H1 (cell line): ENCODE measurements at regions of chr9 and their contacts with region 1.

Region 1: DNA sequence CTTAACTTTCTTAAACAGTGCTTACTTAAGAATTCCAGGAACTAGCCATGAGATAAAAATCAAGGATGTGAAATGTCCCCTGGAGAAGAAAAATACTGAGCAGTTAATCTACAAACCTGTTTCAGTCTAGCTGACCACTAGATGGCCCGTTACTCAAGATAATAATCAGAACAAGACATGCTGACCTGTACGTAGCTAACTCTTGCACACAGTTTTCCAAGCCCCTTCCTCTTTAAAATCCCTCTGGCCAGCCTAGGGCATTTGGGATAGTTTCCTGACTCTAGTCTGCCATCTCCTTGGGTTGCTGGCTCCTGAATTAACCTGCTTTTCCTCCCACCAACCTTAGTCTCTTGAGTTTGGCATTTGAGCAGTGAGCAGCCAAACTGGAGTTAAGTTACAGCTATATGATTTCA is 59.2 kb upstream of the TRAF1 start:
- DNase-seq: no peak
- H3K4me3 ChIP-seq: no peak overlapping the region
- H3K27ac ChIP-seq: no peak overlapping the region
- H3K4me1 ChIP-seq: no peaks in the 10 kb centered on the region
- H3K27me3 ChIP-seq: no peaks in the 10 kb centered on the region
- CTCF ChIP-seq: peak in 2 of 3 experiments; percentile 64 to 66; a peak in 3 of 4 replicates
- EP300 ChIP-seq: no peak
- POLR2A ChIP-seq: no peak
- RAD21 ChIP-seq: peak; percentile 70 to 78

Region 2: DNA sequence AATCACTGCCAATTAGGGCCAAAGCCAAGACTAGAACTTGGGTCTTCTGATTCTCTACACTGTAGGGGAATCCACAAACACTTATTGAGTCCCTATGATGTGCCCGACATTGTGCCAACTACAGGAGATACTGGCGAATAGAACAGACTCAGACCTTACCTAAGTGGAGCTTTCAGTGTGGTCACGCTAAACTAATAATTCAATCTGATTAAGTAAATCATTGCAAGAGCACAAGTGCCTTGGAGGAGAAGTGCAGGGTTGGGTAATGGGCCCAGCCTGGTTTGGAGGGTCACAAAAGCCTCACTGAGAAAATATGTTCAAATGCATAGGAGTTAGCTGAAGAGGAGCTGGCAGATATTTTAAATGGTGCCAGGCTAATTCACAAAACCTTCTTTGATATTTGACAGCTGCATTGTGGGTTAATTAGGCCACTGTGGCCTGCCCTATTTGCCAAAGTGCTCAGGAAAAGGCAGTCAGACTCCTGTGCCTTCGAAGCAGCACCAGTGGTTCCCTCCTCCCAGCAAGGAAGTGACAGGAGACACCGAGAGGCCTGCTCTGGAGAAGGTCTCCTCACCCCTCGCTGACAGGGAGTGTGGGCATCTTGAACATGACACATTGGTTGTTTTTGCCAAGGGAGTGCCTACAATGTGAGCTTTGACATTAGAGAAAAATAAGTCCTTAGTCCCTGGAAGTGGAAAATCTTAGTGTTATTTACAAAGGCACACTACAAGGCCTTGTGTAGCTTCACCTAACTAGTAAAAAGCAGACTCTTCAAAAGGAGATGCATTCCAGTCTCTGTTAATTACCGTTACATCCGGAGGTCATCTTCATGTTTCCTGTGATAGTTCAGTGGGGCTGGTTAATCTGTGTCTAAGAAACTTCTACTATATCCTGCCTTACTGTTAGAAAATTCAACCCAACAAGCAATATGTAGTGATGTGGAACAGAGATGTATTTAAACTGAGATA is 35.1 kb before region 1 on chr9:
- CTCF ChIA-PET with region 1: interaction called, 17 read pairs
- POLR2A ChIA-PET with region 1: no interaction called
- DNase-seq: no peak
- H3K4me3 ChIP-seq: no peak overlapping the region
- H3K27ac ChIP-seq: no peak overlapping the region
- H3K4me1 ChIP-seq: no peaks in the 10 kb centered on the region; a peak in 2 of 7 replicates
- H3K27me3 ChIP-seq: no peaks in the 10 kb centered on the region
- CTCF ChIP-seq: no peak
- EP300 ChIP-seq: no peak
- POLR2A ChIP-seq: no peak
- RAD21 ChIP-seq: no peak

Region 3: DNA sequence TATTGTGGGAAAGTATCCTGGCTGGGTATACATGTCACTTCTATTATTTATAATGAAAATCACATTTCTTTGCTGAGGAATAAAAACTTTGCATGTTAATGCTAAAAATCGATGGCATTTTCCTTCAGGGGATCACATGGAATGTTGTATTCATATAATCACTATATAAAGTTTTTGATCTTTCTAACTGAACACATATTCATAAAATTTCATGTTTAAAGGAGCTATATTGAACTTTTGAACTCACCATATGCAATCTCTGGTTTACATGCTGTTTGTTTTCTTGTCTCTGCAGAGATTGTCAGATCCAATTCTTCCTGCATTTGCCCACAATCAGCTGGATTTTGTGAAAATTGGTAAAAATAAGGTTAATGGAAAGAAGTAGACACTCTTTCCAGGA is 25.8 kb before region 1 on chr9:
- CTCF ChIA-PET with region 1: interaction called, 21 read pairs
- POLR2A ChIA-PET with region 1: interaction called, 4 read pairs
- DNase-seq: no peak
- H3K4me3 ChIP-seq: no peak overlapping the region
- H3K27ac ChIP-seq: no peak overlapping the region
- H3K4me1 ChIP-seq: peaks cover 0 to 3% (median 2%) of the 10 kb centered on the region in 4 experiments; a peak in 2 of 7 replicates
- H3K27me3 ChIP-seq: no peaks in the 10 kb centered on the region
- CTCF ChIP-seq: no peak
- EP300 ChIP-seq: no peak
- POLR2A ChIP-seq: no peak
- RAD21 ChIP-seq: no peak

Region 4: GRCh38 chr9:120965344-120966012 is 20.3 kb before region 1 on chr9:
- CTCF ChIA-PET with region 1: interaction called, 21 read pairs
- POLR2A ChIA-PET with region 1: interaction called, 4 read pairs
- DNase-seq: no peak
- H3K4me3 ChIP-seq: no peak overlapping the region
- H3K27ac ChIP-seq: no peak overlapping the region
- H3K4me1 ChIP-seq: peaks cover 2 to 9% (median 5%) of the 10 kb centered on the region in 4 experiments; a peak in 4 of 7 replicates
- H3K27me3 ChIP-seq: no peaks in the 10 kb centered on the region
- CTCF ChIP-seq: no peak
- EP300 ChIP-seq: no peak
- POLR2A ChIP-seq: no peak
- RAD21 ChIP-seq: no peak

Region 5: GRCh38 chr9:120971938-120972337 is 13.9 kb before region 1 on chr9:
- CTCF ChIA-PET with region 1: interaction called, 21 read pairs
- POLR2A ChIA-PET with region 1: no interaction called
- DNase-seq: no peak
- H3K4me3 ChIP-seq: no peak overlapping the region
- H3K27ac ChIP-seq: no peak overlapping the region
- H3K4me1 ChIP-seq: peaks cover 0 to 4% (median 0%) of the 10 kb centered on the region in 4 experiments; a peak in 1 of 7 replicates
- H3K27me3 ChIP-seq: no peaks in the 10 kb centered on the region
- CTCF ChIP-seq: no peak
- EP300 ChIP-seq: no peak
- POLR2A ChIP-seq: no peak
- RAD21 ChIP-seq: no peak

Region 6: GRCh38 chr9:121082075-121082474 is 96.3 kb after region 1 on chr9:
- CTCF ChIA-PET with region 1: interaction called, 13 read pairs
- POLR2A ChIA-PET with region 1: no interaction called
- DNase-seq: no peak
- H3K4me3 ChIP-seq: no peak overlapping the region
- H3K27ac ChIP-seq: no peak overlapping the region
- H3K4me1 ChIP-seq: no peaks in the 10 kb centered on the region
- H3K27me3 ChIP-seq: no peaks in the 10 kb centered on the region
- CTCF ChIP-seq: no peak
- EP300 ChIP-seq: no peak
- POLR2A ChIP-seq: no peak
- RAD21 ChIP-seq: no peak